ENCODE measurements at regions of chr9 and their contacts with region 1.

Region 1: GRCh38 chr9:104386425-104387069 is 117.5 kb upstream of the OR13F1 start:
- DNase-seq: no peak
- H3K4me3 ChIP-seq: no peak overlapping the region
- H3K27ac ChIP-seq: no peak overlapping the region
- H3K27me3 ChIP-seq: peaks cover 0 to 13% (median 0%) of the 10 kb centered on the region in 45 donors
- CTCF ChIP-seq: peak; percentile 38 to 82 (median 66)

Region 2: DNA sequence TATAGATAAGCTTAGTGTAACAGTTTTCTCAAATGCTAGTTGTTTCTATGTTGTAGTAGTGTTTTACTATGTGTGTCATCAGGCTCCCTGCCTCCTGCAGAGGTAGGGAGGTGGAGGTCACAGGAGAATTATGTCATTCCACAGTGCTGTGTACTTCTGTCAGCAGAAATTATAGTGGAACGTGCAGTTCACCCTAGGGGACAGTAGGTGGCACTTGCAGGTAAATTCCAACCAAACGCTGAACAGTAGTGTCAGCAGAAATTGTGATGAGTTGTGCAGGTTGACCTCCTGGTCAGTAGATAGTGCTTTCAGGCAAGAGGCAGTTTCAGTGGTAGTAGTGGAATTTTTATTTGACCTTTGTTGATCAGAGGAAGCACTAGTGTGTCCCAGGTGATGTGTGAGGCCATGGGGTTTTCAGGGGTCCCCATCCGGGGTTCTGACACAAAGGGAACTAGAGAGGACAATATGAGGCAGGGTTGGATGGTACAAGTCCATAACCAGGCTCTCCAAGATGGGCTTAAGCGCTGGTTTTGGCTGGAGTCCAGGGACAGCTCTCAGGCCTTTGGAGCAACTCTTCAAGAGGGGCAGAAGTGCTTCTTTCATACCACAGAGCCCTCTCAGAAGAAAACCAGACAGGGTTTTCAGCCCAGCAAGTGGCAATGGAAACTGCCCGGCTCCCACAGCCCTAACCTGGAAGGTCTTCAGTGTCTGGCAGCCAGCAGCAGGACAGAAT is 988.5 kb before region 1 on chr9:
- intact Hi-C with region 1: loop called in 1 of 2 experiments (anchors 10 kb)
- DNase-seq: peak in 3 of 10 donors; percentile 8 to 46 (median 42)
- H3K4me3 ChIP-seq: no peak overlapping the region
- H3K27ac ChIP-seq: no peak overlapping the region
- H3K27me3 ChIP-seq: no peaks in the 10 kb centered on the region
- CTCF ChIP-seq: peak; percentile 36 to 80 (median 66)